Caco-2 (cell line): ENCODE measurements at regions of chrX and their contacts with region 1.

Region 1: GRCh38 chrX:70998411-70999027 is 67.6 kb upstream of the SLC7A3 start:
- DNase-seq: peak; percentile 45 to 50
- H3K4me3 ChIP-seq: no peak overlapping the region
- H3K4me3 Mint-ChIP-seq: no peak overlapping the region
- H3K27ac Mint-ChIP-seq: no peak overlapping the region
- H3K4me1 ChIP-seq: no peaks in the 10 kb centered on the region
- H3K4me1 Mint-ChIP-seq: peaks cover 21% of the 10 kb centered on the region
- H3K27me3 ChIP-seq: no peaks in the 10 kb centered on the region
- H3K27me3 Mint-ChIP-seq: no peaks in the 10 kb centered on the region
- CTCF ChIP-seq: peak in 1 of 2 experiments; percentile 51

Region 2: DNA sequence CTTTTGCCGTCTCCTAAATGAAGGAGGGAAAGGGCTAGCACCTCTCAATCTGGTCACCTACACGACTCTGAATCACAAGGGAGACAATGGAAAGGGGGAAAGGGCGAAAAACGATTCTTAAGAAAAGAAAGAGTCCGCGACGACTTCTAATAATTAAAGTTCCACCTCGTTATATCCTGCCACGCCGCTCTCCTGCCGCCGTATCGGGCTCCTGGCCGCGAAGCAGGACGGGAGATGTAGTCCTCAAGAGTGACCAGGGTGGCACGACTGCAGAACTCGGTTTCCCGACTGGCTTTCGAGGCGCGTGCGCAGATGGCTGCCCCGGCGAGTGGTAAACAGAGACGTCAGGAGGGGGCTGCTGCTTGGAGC is 97.0 kb after region 1 on chrX and contains the start of gene FOXO4:
- CTCF ChIA-PET with region 1: no interaction called
- POLR2A ChIA-PET with region 1: no interaction called
- intact Hi-C with region 1: loop called (anchors 10 kb)
- DNase-seq: peak; percentile 87 to 88
- H3K4me3 ChIP-seq: peak within 1 kb of the TSS; percentile 66
- H3K4me3 Mint-ChIP-seq: peak within 1 kb of the TSS; percentile 91
- H3K27ac Mint-ChIP-seq: peak within 1 kb of the TSS; percentile 57
- H3K4me1 ChIP-seq: no peaks in the 10 kb centered on the region
- H3K4me1 Mint-ChIP-seq: no peaks in the 10 kb centered on the region
- H3K27me3 ChIP-seq: no peaks in the 10 kb centered on the region
- H3K27me3 Mint-ChIP-seq: no peaks in the 10 kb centered on the region
- CTCF ChIP-seq: no peak
- total RNA-seq, gene FOXO4: 13.7 and 17.4 TPM in 2 replicates

Region 3: GRCh38 chrX:71128915-71129765 is 130.6 kb after region 1 on chrX:
- CTCF ChIA-PET with region 1: no interaction called
- POLR2A ChIA-PET with region 1: no interaction called
- intact Hi-C with region 1: loop called (anchors 1 kb)
- DNase-seq: peak; percentile 52 to 70
- H3K4me3 ChIP-seq: no peak overlapping the region
- H3K4me3 Mint-ChIP-seq: no peak overlapping the region
- H3K27ac Mint-ChIP-seq: peak overlapping the region; percentile 5
- H3K4me1 ChIP-seq: no peaks in the 10 kb centered on the region
- H3K4me1 Mint-ChIP-seq: peaks cover 17% of the 10 kb centered on the region
- H3K27me3 ChIP-seq: no peaks in the 10 kb centered on the region
- H3K27me3 Mint-ChIP-seq: no peaks in the 10 kb centered on the region
- CTCF ChIP-seq: peak; percentile 68 to 76